Lower lobe of right lung (tissue), 2 donors: ENCODE measurements at regions of chr17 and their contacts with region 1.

Region 1: DNA sequence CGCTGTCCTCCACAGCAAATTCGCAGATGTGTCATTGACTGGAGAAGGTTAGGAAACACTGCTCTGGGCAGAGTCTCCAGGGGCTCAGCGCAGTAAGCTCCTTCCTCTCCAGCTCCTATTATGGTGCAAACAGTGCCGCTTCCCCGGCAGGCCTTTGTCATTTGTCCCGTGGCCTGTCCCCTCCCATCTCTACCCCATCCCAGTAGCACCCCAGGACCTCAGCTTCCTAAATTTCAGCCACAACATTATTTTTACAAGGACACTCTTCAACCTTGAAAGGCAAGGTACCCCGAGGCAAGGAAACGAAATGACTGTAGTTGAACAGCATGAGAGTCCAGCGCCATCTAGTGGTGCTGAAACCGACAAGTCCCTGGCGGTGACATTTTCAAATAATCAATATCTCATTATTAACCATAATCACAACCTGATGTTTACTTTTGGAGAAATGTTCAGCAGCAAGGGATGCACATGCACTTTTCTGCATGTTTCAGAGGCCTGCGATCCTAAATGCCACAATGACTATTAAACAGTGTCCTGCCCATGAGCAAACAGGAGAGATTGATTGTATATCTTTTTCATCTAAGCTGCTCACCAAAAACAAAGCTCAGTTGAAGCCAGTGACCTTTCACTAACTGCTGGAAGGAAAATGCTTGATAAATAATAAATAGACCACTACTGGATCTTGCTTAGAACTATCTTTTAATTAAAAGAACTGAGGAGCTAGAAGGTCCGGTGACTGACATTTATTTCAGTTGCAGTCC is 16.5 kb downstream of the MRPS23 start:
- DNase-seq: peak; percentile 62
- ATAC-seq: peak; percentile 85
- H3K4me3 ChIP-seq: peak overlapping the region; percentile 48
- H3K27ac ChIP-seq: peak overlapping the region; percentile 43
- H3K4me1 ChIP-seq: peaks cover 17% of the 10 kb centered on the region
- H3K27me3 ChIP-seq: no peaks in the 10 kb centered on the region
- CTCF ChIP-seq: peak; percentile 87

Region 2: DNA sequence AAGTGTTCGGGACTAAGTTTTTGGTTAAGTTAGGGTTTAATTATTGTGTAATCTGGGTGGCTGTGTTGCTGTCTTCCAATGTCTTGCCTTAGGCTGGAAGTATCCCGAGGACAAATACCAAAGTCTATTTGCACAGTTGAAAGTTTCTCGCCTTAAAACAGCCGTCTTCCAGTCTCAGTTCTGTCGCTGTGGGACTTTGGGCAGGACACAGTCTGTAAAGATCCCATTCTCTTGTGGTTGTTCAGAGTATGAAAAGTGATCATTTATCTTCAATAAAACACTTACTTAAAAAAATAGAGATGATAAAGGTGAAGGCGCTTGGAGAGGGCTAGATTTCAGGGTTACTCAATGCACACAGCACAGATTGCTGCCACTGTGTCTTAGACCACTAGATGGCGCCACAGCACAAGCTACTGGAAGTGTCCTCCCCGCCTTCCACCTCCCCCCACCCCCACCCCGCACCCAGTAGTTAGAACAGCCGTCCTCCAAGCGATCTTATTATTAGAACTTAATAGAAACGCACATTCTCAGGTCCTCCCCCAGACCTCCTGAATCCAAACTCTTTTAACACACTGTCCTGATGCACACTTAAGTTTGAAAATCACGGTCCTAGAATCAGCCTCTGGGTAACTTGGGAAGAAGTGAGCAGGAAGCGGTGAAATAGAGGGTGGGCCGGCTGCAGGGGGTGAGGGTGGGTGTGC is 702.4 kb before region 1 on chr17:
- intact Hi-C with region 1: loop called (anchors 10 kb)
- DNase-seq: peak; percentile 80
- ATAC-seq: peak; percentile 95 to 96
- H3K4me3 ChIP-seq: no peak overlapping the region
- H3K27ac ChIP-seq: no peak overlapping the region
- H3K4me1 ChIP-seq: no peaks in the 10 kb centered on the region
- H3K27me3 ChIP-seq: no peaks in the 10 kb centered on the region
- CTCF ChIP-seq: peak; percentile 84